ENCODE measurements at regions of chr11 and their contacts with region 1.

Region 1: GRCh38 chr11:29432719-29433325 is 584.0 kb downstream of the KCNA4 start:
- DNase-seq: no peak
- ATAC-seq: no peak
- H3K4me3 Mint-ChIP-seq: no peak overlapping the region
- H3K27ac Mint-ChIP-seq: no peak overlapping the region
- H3K4me1 Mint-ChIP-seq: no peaks in the 10 kb centered on the region
- H3K27me3 Mint-ChIP-seq: no peaks in the 10 kb centered on the region

Region 2: DNA sequence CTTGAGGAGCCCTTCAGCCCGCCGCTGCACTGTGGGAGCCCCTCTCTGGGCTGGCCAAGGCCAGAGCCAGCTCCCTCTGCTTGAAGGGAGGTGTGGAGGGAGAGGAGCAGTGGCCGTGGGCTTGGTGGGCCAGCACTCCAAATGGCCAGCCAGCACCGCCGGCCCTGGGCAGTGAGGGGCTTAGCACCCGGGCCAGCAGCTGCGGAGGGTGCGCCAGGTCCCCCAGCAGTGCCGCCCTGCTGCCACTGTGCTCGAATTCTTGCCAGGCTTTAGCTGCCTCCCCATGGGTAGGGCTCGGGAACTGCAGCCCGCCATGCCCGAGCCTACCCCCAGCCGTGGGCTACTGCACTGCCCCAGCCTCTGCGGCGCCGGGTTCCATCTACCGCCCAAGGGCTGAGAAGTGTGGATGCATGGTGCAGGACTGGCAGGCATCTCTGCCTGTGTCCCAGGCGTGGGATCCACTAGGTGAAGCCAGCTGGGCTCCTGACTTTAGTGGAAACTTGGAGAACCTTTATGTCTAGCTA is 501.4 kb after region 1 on chr11:
- CTCF ChIA-PET with region 1: no interaction called
- POLR2A ChIA-PET with region 1: no interaction called
- intact Hi-C with region 1: no loop called
- DNase-seq: no peak
- ATAC-seq: no peak
- H3K4me3 Mint-ChIP-seq: no peak overlapping the region
- H3K27ac Mint-ChIP-seq: no peak overlapping the region
- H3K4me1 Mint-ChIP-seq: no peaks in the 10 kb centered on the region
- H3K27me3 Mint-ChIP-seq: no peaks in the 10 kb centered on the region

Region 3: DNA sequence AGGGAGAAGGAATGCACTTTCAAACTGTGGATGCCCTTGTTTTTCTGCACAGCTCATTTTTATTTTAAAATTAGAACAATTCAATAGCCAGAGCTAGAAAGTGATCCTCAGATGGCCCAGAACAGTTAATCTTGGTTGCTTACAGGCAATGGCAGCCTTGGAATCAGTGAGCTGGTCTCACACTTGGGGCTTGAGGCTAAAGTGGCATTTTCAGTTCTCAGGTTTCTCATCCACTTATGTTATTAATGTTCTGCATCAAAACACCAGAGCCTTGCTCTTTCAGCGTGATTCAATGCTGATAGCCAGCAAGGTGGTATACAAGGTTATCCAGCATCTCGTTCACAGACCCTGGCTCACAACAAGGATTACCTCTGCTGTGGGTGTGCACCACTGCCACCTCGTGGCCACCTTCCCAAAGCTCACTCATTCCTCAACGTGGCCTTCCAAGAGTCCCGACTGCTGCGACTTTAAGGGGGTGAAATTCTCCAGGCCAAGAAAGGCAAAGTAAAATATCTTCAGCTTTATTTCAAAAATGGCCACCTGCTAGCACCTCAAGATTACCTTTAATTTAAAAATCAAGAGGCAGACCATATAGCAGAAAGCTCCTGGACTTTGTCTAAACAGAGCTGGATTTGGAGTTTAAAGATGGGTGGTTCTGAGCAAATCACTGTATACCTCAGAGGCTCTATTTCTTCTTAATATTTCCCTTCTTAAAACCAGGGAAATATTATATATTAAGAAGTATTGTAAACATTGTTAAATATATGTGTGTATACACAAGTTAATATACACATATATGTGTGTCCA is 763.8 kb after region 1 on chr11:
- CTCF ChIA-PET with region 1: no interaction called
- POLR2A ChIA-PET with region 1: no interaction called
- intact Hi-C with region 1: loop called in 1 of 2 experiments (anchors 2 kb)
- DNase-seq: peak; percentile 64
- ATAC-seq: peak; percentile 71
- H3K4me3 Mint-ChIP-seq: no peak overlapping the region
- H3K27ac Mint-ChIP-seq: no peak overlapping the region
- H3K4me1 Mint-ChIP-seq: no peaks in the 10 kb centered on the region
- H3K27me3 Mint-ChIP-seq: no peaks in the 10 kb centered on the region

Region 4: GRCh38 chr11:30917859-30918478 is 1485.1 kb after region 1 on chr11:
- CTCF ChIA-PET with region 1: no interaction called
- POLR2A ChIA-PET with region 1: no interaction called
- intact Hi-C with region 1: loop called in 1 of 2 experiments (anchors 10 kb)
- DNase-seq: peak; percentile 9
- ATAC-seq: peak; percentile 55
- H3K4me3 Mint-ChIP-seq: no peak overlapping the region
- H3K27ac Mint-ChIP-seq: no peak overlapping the region
- H3K4me1 Mint-ChIP-seq: no peaks in the 10 kb centered on the region
- H3K27me3 Mint-ChIP-seq: peaks cover 7% of the 10 kb centered on the region

Measured in activated CD4-positive, alpha-beta T cell treated with anti-CD3 and anti-CD28 coated beads for 36 hours (primary cell).